Activated CD4-positive, alpha-beta memory T cell treated with anti-CD3 and anti-CD28 coated beads for 36 hours (primary cell): ENCODE measurements at regions of chrX and their contacts with region 1.

Region 1: GRCh38 chrX:103918581-103919269 is 43.7 kb upstream of the TMSB15B start:
- DNase-seq: peak; percentile 78
- H3K4me3 Mint-ChIP-seq: peak overlapping the region; percentile 91
- H3K27ac Mint-ChIP-seq: peak overlapping the region; percentile 94
- H3K4me1 Mint-ChIP-seq: peaks cover 18% of the 10 kb centered on the region
- H3K27me3 Mint-ChIP-seq: no peaks in the 10 kb centered on the region

Region 2: DNA sequence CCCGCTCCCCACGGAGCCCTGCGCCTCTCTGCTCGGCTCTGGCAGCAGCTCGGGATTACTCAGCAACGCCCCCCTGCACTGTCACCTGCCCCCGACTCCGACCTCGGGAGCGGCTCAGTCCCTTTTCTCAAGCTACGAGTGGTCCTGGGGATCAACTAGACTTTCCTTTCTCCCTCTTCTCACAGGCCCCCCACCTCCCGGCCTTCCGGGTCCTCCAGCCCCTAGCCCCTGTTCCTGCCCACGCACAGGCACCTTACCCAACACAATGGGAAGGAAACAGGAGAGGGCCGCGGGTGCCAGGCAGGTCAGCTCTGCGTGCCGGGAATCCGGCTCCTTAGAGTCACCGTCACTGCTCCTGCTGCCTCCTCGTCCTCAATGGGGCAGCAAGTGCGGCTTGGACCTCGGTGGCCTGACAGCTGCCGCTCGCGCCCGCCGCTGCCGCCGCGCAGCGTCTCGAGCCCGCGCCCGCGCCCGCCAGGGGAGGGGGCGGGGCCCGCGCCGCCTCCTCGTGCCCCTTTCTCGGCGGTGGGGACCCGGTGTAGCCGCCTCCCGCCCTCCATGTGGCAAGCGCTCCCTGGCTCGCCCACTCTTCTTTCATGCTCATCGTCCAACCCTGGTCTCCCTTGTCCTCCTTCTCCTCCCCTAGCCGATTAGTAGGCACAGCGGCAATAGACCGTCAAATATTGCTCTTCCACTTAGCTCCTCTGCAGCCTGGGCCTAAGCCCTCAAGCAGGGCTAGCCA is 86.8 kb before region 1 on chrX and contains the start of gene RAB9B:
- CTCF ChIA-PET with region 1: no interaction called
- POLR2A ChIA-PET with region 1: no interaction called
- intact Hi-C with region 1: loop called (anchors 5 kb)
- DNase-seq: peak; percentile 75
- H3K4me3 Mint-ChIP-seq: peak within 1 kb of the TSS; percentile 70
- H3K27ac Mint-ChIP-seq: no peak within 1 kb of the TSS
- H3K4me1 Mint-ChIP-seq: peaks cover 3% of the 10 kb centered on the region
- H3K27me3 Mint-ChIP-seq: peaks cover 4% of the 10 kb centered on the region
- total RNA-seq, gene RAB9B: 0.44 to 0.57 TPM

Region 3: GRCh38 chrX:103845165-103845653 is 73.5 kb before region 1 on chrX:
- CTCF ChIA-PET with region 1: interaction called, 5 read pairs
- POLR2A ChIA-PET with region 1: no interaction called
- intact Hi-C with region 1: loop called (anchors 1 kb)
- DNase-seq: peak; percentile 58
- H3K4me3 Mint-ChIP-seq: no peak overlapping the region
- H3K27ac Mint-ChIP-seq: no peak overlapping the region
- H3K4me1 Mint-ChIP-seq: peaks cover 5% of the 10 kb centered on the region
- H3K27me3 Mint-ChIP-seq: no peaks in the 10 kb centered on the region

Region 4: GRCh38 chrX:103932133-103932532 is 13.4 kb after region 1 on chrX:
- CTCF ChIA-PET with region 1: interaction called, 4 read pairs
- POLR2A ChIA-PET with region 1: no interaction called
- intact Hi-C with region 1: loop called (anchors 2 kb)
- DNase-seq: no peak
- H3K4me3 Mint-ChIP-seq: no peak overlapping the region
- H3K27ac Mint-ChIP-seq: no peak overlapping the region
- H3K4me1 Mint-ChIP-seq: peaks cover 7% of the 10 kb centered on the region
- H3K27me3 Mint-ChIP-seq: no peaks in the 10 kb centered on the region

Region 5: DNA sequence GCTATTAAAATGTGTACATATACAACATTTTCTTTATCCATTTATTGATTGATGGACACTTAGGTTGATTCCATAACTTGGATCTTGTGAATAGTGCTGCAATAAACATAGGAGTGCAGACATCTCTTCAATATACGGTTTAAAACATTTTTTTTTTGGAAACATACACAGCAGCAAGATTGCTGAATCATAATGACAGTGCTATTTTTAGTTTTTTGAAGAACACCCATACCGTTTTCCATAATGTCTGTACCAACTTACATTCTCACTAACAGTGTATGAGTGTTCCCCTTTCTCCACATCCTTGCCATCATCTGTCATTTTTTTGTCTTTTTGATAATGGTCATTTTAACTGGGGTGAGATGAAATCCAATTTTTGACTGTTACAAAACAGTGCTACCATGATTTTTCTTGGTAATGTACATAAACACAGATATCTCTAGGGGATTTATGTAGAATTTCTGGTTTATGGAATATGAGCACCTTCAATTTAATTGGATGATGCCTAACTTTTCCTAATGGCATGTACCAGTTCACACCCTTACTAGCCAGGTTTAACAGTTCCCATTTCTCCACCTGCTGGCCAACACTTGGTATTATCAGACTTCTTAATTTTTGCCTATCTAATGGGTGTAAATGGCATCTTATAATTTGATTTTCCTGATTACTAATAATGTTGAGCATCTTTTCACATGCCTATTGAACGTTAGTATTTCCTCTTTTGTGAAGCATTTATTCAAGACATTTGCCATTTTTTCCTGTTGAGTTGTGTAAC is 22.7 kb after region 1 on chrX:
- CTCF ChIA-PET with region 1: interaction called, 6 read pairs
- POLR2A ChIA-PET with region 1: no interaction called
- intact Hi-C with region 1: loop called (anchors 1 kb)
- DNase-seq: no peak
- H3K4me3 Mint-ChIP-seq: no peak overlapping the region
- H3K27ac Mint-ChIP-seq: no peak overlapping the region
- H3K4me1 Mint-ChIP-seq: peaks cover 39% of the 10 kb centered on the region
- H3K27me3 Mint-ChIP-seq: no peaks in the 10 kb centered on the region

Region 6: DNA sequence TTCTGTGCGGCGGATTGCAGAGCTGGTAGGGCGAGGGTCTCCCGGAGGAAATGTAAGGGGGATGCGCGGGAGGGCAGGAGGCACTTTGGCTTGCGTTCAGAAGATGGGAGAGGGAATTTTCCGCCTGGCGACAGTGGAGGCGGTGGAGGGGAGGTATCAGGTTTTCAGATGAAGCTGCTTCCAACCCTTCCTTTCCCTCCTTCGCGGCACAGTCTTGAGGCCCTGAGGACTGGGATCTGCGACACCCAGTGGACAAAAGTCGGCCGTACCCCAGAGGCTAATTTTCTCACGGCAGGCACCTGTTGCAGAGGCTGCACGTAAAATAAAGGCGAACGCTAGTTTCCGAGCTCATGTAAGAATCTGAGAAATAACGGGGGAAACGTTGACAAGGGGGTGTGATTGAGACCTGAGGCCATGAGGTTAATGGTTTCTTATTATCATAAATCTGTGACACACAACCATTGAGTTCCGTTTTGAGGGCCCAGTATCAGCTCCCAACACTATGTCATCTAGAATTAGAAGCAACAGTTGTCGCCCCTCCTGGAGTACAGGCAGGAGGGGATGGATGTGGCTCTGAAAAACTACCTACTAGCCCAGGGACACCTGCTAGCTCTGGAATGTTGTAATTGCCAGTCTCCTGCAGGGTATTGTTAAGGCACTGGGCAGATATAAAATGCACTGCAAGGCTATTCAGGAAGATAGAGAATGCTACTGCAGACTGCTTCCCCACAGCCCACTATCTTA is 194.7 kb after region 1 on chrX:
- CTCF ChIA-PET with region 1: interaction called, 5 read pairs
- POLR2A ChIA-PET with region 1: no interaction called
- intact Hi-C with region 1: loop called (anchors 2 kb)
- DNase-seq: peak; percentile 70
- H3K4me3 Mint-ChIP-seq: peak overlapping the region; percentile 79
- H3K27ac Mint-ChIP-seq: peak overlapping the region; percentile 49
- H3K4me1 Mint-ChIP-seq: peaks cover 44% of the 10 kb centered on the region
- H3K27me3 Mint-ChIP-seq: no peaks in the 10 kb centered on the region

Region 7: GRCh38 chrX:104156630-104157529 is 238.2 kb after region 1 on chrX and contains the start of gene SLC25A53:
- CTCF ChIA-PET with region 1: interaction called, 5 read pairs
- POLR2A ChIA-PET with region 1: interaction called, 6 read pairs
- intact Hi-C with region 1: loop called (anchors 2 kb)
- DNase-seq: peak; percentile 87
- H3K4me3 Mint-ChIP-seq: peak within 1 kb of the TSS; percentile 99
- H3K27ac Mint-ChIP-seq: peak within 1 kb of the TSS; percentile 100
- H3K4me1 Mint-ChIP-seq: peaks cover 15% of the 10 kb centered on the region
- H3K27me3 Mint-ChIP-seq: no peaks in the 10 kb centered on the region
- total RNA-seq, gene SLC25A53: 3.6 to 4.2 TPM